ENCODE measurements at regions of chr5 and their contacts with region 1.

Region 1: DNA sequence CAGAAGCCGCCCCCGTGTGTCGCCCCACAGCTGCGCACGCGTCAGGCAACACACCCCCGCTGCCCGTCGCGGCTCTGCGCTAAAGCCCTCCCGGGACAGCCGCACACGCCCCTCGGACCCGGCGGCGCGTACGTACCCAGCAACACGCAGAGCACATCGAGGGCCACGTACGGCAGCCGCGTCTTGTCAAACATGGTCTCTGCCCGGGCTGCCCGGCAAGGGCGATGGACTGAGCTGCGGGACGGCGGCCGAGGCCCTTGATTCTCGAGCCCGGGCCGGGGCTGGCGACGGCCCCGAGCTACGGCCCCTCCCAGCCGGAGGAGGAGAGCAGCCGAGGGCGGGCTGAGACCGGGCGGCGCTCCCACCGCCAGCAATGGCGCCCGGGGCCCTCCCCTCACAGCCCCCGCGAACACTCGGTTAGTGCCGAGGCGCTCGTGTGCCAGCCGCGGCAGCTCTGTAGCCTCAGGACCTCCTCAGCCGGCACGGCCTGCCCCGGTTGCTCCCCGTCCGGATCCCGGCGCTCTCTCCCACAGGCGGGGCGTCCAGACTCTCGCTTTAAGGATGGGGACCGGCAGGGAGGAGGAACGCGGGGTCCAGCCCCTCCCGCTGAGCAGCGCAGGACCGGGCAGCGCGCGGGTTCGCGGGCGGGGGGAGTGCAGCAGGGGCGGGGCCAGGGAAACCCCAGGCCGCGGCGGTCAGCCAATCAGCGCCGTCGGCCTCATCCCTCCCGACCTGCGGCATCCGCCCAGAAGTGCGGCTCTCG is at the start of gene PLPP1:
- DNase-seq: peak; percentile 84
- H3K4me3 Mint-ChIP-seq: peak within 1 kb of the TSS; percentile 91
- H3K27ac Mint-ChIP-seq: peak within 1 kb of the TSS; percentile 83
- H3K4me1 Mint-ChIP-seq: peaks cover 56% of the 10 kb centered on the region
- H3K27me3 Mint-ChIP-seq: peaks cover 4% of the 10 kb centered on the region
- total RNA-seq, gene PLPP1: 25.8 and 27.5 TPM in 2 replicates

Region 2: DNA sequence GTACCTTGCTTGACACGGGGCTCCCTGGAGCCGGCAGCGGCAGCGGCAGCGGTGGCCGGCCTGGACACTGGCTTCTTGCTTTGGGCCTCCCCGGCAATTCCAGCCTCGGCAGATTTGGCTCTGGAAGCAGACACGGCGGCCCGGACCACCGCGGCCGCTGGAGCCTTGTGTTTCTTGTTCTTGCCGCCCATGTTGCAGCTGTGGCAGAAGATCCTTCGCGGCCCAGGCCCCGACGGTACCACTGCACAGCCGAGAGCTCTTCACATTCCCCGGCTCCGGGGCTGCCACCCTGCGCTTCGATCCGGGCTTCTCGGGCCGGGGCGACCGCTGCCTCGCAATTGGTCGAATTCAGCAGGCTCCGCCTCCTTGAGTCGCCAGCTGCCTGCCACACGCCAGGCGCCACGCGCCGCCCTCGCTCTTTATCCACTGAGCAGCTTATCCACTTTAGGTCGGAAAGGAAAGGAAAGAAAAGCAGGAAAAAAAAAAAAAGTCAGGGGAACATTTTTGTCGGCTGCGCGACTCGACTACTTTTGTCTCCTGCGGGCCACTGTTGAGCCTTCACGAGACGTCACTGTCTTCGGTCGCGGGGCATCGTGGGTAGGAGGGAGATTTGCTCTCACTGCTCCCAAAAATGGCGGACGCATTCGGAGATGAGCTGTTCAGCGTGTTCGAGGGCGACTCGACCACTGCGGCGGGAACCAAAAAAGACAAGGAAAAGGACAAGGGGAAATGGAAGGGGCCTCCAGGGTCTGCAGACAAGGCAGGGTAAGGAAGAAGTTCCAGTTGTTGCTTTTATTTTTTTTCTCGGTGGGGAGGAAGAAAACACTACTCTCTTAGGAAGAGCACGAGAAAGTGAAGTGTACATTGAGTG is 227.0 kb before region 1 on chr5 and contains the starts of genes DHX29 and MTREX:
- intact Hi-C with region 1: loop called (anchors 2 kb)
- DNase-seq: peak; percentile 89
- H3K4me3 Mint-ChIP-seq: no peak within 1 kb of the TSS
- H3K27ac Mint-ChIP-seq: no peak within 1 kb of the TSS
- H3K4me1 Mint-ChIP-seq: peaks cover 19% of the 10 kb centered on the region
- H3K27me3 Mint-ChIP-seq: no peaks in the 10 kb centered on the region
- total RNA-seq, gene DHX29: 20.3 and 22.3 TPM in 2 replicates
- total RNA-seq, gene MTREX: 110 and 122 TPM in 2 replicates

Region 3: GRCh38 chr5:55421074-55421529 is 113.5 kb before region 1 on chr5:
- intact Hi-C with region 1: loop called (anchors 1 kb)
- DNase-seq: no peak
- H3K4me3 Mint-ChIP-seq: no peak overlapping the region
- H3K27ac Mint-ChIP-seq: peak overlapping the region; percentile 3
- H3K4me1 Mint-ChIP-seq: peaks cover 16% of the 10 kb centered on the region
- H3K27me3 Mint-ChIP-seq: no peaks in the 10 kb centered on the region

Region 4: DNA sequence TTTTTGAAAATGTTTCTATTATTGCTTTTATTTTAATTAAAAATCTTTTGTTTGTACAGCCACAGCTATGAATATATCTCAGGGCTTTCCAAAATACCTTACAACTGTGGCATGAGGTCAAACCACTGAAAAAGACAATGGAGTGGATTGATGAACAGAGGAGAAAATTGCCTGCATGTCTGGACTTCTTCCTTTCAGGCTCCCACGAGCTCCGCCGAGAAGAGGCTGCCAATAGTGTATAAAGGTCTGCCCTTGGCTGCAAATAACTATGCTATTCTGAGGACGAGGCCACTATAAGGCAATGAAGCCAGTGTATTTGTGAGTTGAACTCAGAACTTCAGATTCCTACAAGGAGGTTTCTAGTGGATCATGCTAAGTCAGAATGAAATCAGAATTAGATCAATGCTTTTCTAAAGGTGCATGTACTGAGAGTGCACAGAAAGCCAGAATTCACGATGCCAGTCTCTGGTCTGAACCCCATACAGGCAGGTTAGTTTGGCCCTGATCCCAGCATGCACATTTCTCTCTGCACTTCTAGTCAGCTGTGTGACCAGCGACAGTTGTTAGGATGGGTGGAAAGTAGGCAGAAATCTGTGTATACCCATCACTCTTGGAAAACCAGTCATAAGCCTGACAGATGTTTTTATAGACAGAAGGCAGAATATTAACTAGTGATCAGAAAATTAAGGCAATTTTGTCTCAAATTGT is 42.9 kb after region 1 on chr5:
- intact Hi-C with region 1: loop called (anchors 2 kb)
- DNase-seq: no peak
- H3K4me3 Mint-ChIP-seq: no peak overlapping the region
- H3K27ac Mint-ChIP-seq: peak overlapping the region; percentile 21
- H3K4me1 Mint-ChIP-seq: peaks cover 33% of the 10 kb centered on the region
- H3K27me3 Mint-ChIP-seq: no peaks in the 10 kb centered on the region

Region 5: GRCh38 chr5:55650386-55650785 is 115.8 kb after region 1 on chr5:
- intact Hi-C with region 1: loop called (anchors 2 kb)
- DNase-seq: no peak
- H3K4me3 Mint-ChIP-seq: no peak overlapping the region
- H3K27ac Mint-ChIP-seq: no peak overlapping the region
- H3K4me1 Mint-ChIP-seq: peaks cover 24% of the 10 kb centered on the region
- H3K27me3 Mint-ChIP-seq: no peaks in the 10 kb centered on the region

Region 6: GRCh38 chr5:55711968-55712859 is 177.6 kb after region 1 on chr5 and contains the start of gene SLC38A9:
- intact Hi-C with region 1: loop called (anchors 1 kb)
- DNase-seq: peak; percentile 89
- H3K4me3 Mint-ChIP-seq: peak within 1 kb of the TSS; percentile 99
- H3K27ac Mint-ChIP-seq: peak within 1 kb of the TSS; percentile 91
- H3K4me1 Mint-ChIP-seq: peaks cover 39% of the 10 kb centered on the region
- H3K27me3 Mint-ChIP-seq: no peaks in the 10 kb centered on the region
- total RNA-seq, gene SLC38A9: 22.9 and 25.7 TPM in 2 replicates